Cardiac septum (tissue), 1 donor: ENCODE measurements at regions of chr13 and their contacts with region 1.

Region 1: GRCh38 chr13:44435142-44435982 is 61.7 kb downstream of the SERP2 start:
- DNase-seq: peak; percentile 96

Region 2: DNA sequence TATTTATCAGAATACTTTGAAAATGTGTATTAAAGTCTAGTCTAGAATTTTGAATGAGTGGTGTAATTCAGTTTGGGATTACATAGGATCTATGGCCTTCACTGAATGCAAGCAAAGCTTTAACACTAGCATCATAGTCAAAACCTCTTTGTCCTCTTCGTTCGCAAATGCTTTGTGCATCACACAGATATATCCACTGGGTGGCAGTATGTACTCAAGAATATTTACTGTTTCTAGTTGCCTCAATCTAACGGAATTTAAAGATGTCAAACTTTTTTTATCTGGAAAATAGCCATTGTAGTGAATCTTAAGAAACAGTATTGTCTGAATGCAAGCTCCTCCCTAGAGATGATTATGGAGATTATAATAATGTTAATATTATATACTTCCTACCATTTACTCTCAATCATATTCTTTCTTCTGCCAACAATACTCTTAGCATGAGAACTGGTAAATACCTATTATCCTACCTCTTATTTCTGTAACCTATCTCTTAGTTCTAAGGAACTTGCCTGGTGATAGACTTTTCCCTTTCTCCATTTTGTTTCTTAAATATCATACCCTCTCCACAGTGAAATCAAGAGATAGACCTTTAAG is 529.8 kb before region 1 on chr13:
- intact Hi-C with region 1: loop called (anchors 2 kb)
- DNase-seq: no peak

Region 3: GRCh38 chr13:44108331-44108858 is 327.0 kb before region 1 on chr13:
- intact Hi-C with region 1: loop called (anchors 2 kb)
- DNase-seq: no peak

Region 4: DNA sequence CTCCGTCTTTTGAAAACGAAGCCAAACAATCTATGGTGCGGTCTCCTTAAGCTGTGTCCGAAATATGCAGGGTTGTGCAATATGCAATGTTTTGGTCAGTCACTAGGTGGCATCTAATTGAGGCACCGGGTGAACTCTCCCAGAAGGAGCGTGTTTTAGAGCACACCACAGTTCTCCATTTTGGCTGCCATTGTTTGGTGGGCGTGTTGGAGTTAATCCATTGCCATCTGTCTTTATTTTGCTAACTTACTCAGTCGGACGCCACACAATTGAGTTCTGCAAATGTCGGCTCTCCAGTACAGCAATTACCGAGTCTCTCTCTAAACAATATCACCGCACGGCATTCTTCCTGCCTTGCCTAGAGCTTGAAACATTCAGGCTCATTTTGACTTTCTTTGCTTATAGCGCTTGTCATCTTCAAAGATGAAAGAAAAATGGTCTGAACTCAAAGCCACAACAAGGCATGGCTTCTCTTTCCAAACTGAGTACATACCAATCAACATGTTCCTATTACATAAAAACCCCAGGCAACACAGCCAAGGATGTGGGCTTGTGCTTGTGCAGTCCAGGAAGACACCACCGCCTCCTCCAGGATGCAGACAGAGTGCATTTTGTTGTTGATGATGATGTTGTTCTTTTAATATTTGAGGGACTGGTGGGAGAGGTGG is 243.7 kb before region 1 on chr13:
- intact Hi-C with region 1: loop called (anchors 1 kb)
- DNase-seq: no peak

Region 5: DNA sequence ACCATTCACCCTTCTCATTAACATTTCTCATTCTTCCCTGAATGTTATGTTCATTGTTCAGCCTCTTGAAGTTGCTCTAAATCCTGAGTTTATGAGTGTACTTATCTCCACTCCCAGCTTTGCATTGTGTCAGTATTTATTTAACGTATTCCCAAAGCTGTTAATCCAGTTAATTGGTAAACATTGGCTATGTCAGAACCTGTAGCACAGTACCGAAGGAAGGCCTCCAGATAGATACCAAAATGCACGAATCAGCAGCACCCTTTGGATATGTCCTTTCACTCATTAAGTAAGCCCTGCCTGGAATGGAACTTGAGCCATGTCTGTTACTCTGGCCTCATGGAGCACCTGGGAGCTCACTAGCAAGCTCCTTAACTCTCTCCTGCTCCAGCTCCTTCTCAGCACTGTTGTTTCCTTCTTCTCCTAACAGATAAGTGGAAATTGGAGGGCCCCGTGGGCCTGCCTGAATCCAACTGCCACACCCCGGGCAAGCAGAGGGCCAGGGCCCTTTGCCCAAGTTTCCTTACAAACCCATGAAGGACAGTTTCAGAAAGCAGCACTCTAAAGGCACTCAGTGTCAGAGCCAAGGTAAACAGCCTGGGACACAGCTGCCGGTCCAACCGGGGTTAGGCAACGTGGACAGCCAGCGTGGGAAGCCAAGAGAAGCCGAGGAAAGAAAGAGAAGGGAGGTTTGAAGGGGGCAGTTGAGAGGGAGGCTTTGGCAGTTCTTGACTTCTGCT is 216.7 kb before region 1 on chr13:
- intact Hi-C with region 1: no loop called
- DNase-seq: no peak

Region 6: DNA sequence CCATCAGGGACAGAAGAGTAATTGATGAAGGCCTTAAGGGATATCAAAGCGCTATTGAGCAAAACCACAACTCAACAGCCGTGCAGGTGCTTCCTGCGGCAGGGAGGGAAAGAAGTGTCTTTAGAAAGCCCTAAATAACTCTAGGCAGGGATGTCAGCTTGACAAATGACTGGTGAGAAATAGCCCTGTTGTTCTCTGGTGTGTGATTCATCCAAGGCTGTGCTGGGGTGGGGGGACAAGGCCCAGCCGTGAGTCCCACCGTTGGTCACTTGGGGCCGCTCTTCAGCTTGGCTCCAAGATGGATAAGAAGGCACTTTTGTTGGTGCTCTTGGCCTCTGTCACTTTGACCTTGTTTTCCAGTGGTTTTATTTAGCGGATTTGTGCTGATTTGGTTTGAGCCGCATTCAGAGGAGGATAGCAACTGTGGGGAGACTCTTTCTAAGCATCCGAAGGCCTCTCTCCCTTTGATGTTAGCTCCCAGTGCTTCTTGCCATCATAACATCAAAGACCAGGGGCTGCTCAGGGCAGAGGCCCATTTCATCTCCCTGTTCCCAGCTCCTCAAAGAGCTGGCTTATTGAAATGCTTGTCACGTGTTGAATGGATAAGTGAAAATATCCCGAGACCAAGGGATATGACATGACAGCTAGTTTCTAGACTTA is 192.0 kb before region 1 on chr13:
- intact Hi-C with region 1: loop called (anchors 2 kb)
- DNase-seq: no peak

Region 7: DNA sequence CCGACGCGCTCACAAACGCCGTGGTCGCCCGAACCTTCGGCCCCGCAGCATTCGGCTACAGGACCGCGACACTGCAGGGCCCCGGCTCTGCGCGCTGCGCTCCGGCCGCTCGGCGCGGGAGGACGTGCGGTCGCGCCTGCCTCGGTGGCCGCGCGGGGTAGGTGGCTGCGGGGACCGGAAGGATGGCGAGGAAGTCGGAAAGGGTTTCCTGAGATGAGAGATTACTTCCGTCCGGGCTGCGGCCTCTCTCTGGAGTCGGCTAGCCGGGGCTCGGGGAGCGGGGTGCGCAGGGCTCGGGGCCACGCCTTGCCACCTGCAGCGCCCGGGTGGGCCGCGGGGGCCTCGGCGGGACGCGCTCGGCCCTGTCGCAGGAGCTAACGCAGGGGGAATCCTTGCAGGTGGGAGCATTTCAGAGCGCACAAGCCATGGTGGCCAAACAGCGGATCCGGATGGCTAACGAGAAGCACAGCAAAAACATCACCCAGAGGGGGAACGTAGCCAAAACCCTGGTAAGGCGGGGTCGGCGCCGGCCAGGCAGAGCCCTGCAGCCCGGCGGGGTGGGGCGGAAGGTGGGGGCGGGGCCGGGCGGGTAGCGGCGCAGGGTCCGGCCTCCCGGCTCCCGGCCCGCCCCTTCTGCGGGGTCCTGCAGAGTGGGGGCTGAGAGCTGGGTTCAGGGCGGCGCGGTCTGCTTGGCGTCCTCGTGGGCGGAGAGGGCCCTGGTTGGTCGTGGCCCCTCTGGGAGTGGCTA is 61.6 kb before region 1 on chr13 and contains the start of gene SERP2:
- intact Hi-C with region 1: loop called (anchors 5 kb)
- DNase-seq: no peak
- total RNA-seq, gene SERP2: 7.9 TPM

Region 8: DNA sequence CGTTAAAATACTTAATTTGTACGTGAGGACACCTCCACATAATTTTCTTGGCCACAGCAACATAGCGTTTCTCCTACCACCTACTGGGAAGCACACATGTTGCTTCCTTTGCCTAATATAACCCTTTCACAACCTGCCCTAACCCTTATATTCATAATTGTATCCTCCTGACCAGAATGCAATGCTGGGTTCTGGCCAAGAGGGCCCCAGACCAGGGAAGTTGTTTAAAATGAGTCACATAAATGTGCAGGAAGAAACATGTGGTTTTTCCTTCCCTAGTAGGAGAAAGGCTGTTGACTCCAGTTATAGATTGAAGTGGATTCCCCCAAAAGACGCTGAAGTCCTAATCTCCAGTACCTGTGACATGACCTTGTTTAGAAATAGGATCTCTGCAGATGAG is 366.6 kb after region 1 on chr13:
- intact Hi-C with region 1: no loop called
- DNase-seq: no peak